ENCODE measurements at regions of chr2 and their contacts with region 1.

Region 1: GRCh38 chr2:75787532-75788132 is 76.9 kb upstream of the GCFC2 start:
- DNase-seq: peak in 1 of 10 donors; percentile 14
- H3K4me3 ChIP-seq: no peak overlapping the region
- H3K27ac ChIP-seq: peak overlapping the region in 41 of 59 donors; percentile 0 to 83 (median 52)
- H3K27me3 ChIP-seq: no peaks in the 10 kb centered on the region
- CTCF ChIP-seq: peak; percentile 51 to 91 (median 70)

Region 2: GRCh38 chr2:76464310-76464709 is 676.7 kb after region 1 on chr2:
- intact Hi-C with region 1: loop called in 1 of 2 experiments (anchors 10 kb)
- DNase-seq: no peak
- H3K4me3 ChIP-seq: no peak overlapping the region
- H3K27ac ChIP-seq: no peak overlapping the region
- H3K27me3 ChIP-seq: no peaks in the 10 kb centered on the region
- CTCF ChIP-seq: peak in 9 of 56 donors; percentile 15 to 41 (median 24)

Region 3: DNA sequence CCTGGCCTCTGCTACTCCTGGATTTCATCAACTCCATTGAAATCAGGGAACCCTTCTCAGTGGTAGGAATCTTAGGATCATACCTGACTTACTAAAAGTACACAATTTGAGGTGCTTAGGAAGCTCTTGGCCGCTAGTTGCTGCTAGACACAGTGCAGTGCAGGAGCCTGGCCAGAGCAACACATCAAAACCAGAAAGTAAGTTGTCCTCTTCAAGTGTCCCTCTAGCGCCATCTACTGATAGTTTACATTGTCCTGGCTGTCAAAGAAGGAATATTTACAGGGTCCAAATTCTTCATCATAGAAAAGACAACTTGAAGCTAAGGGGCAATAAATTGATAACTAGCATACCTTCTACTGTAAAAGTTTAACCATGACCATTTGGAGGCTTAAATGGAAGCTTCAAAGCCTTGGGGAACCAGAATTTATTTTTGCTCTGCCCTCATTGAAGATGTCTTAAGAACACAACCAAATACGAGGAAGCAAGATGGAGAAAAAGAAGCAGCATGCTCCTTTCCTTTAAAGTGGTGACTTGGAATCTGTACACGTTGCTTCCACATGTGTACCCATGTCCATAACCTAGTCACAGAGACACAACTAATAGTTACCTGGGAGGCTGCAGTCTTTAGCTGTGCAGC is 812.2 kb after region 1 on chr2:
- intact Hi-C with region 1: loop called (anchors 2 to 10 kb)
- DNase-seq: peak in 8 of 10 donors; percentile 3 to 79 (median 58)
- H3K4me3 ChIP-seq: no peak overlapping the region
- H3K27ac ChIP-seq: no peak overlapping the region
- H3K27me3 ChIP-seq: no peaks in the 10 kb centered on the region
- CTCF ChIP-seq: peak; percentile 38 to 95 (median 86)